Lower leg skin (tissue), 4 donors: ENCODE measurements at regions of chrX and their contacts with region 1.

Region 1: GRCh38 chrX:16075087-16075486 is 48.3 kb upstream of the GRPR start:
- DNase-seq: no peak
- H3K4me3 ChIP-seq: no peak overlapping the region
- CTCF ChIP-seq: no peak
- POLR2A ChIP-seq: no peak

Region 2: DNA sequence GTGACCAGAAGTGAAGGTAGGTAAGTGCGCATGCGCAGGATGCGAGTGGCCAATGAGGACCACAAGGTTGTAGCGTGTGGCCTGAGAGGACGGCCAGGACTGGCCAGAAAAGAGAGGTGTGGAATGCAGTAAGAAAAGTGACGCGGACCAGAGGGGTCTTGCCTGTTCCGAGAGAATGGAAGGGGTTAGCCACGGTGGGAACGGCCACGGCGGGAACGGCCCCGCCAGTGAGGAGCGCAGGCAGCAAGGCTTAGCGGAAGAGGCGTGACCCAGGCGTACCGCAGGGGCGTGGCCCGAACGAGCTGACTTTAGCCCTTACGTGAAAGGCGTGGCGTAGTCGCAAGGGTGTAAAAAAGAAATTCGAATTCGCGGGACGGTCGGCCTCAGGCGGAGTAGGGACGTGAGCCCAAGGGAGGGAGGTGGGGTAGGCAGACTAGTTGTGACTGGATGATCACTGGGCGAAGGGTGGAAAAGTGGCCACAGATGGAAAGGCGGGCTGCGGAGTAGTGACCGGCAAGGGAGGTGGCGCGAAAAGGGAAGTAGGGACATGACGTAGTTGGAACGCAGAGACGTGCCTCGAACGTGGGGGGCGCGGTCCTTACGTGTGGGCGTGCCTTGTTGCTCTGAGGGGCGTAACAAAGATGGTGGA is 400.1 kb before region 1 on chrX:
- intact Hi-C with region 1: loop called (anchors 5 kb)
- DNase-seq: peak; percentile 93 to 99
- H3K4me3 ChIP-seq: peak overlapping the region; percentile 45
- CTCF ChIP-seq: no peak
- POLR2A ChIP-seq: peak in 1 of 2 donors; percentile 59